ENCODE measurements at regions of chr3 and their contacts with region 1.

Region 1: GRCh38 chr3:113287803-113288648 is 76.7 kb downstream of the BOC start:
- DNase-seq: no peak
- ATAC-seq: peak; percentile 45
- H3K4me3 Mint-ChIP-seq: no peak overlapping the region
- H3K27ac Mint-ChIP-seq: no peak overlapping the region
- H3K4me1 Mint-ChIP-seq: no peaks in the 10 kb centered on the region
- H3K27me3 Mint-ChIP-seq: no peaks in the 10 kb centered on the region
- CTCF ChIP-seq: peak; percentile 59

Region 2: DNA sequence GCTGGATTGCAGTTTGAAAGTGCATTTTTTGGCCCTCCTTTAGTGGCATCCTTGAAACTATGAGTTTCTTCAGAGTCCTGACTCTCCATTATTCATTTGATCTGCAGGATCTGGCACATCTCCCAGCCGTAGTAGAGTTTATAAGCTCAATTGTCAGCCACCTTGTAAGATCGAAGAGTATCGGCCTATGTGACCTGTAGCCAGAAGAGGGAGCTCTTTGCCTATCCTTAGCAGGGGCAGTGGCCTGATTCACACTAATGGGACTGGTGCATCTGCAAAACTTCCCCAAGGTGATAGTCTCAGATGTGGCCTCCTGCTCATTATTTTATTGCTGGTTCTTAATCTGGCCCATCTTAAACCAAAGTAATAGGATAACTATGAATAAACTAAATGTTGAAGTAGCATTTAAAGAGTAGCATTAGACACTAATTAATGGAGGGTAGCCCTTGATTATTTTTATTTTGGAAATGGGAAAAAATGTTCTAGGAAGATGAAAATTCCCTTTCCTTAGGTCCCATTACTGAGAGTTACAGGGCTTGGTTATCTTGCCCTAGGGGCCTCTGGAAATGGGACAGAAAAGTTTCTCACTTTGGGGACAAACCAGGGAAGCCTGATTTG is 1176.1 kb before region 1 on chr3:
- CTCF ChIA-PET with region 1: interaction called, 5 read pairs
- POLR2A ChIA-PET with region 1: no interaction called
- intact Hi-C with region 1: loop called (anchors 5 kb)
- DNase-seq: no peak
- ATAC-seq: peak; percentile 79
- H3K4me3 Mint-ChIP-seq: no peak overlapping the region
- H3K27ac Mint-ChIP-seq: no peak overlapping the region
- H3K4me1 Mint-ChIP-seq: peaks cover 53% of the 10 kb centered on the region
- H3K27me3 Mint-ChIP-seq: no peaks in the 10 kb centered on the region
- CTCF ChIP-seq: peak; percentile 68

Region 3: DNA sequence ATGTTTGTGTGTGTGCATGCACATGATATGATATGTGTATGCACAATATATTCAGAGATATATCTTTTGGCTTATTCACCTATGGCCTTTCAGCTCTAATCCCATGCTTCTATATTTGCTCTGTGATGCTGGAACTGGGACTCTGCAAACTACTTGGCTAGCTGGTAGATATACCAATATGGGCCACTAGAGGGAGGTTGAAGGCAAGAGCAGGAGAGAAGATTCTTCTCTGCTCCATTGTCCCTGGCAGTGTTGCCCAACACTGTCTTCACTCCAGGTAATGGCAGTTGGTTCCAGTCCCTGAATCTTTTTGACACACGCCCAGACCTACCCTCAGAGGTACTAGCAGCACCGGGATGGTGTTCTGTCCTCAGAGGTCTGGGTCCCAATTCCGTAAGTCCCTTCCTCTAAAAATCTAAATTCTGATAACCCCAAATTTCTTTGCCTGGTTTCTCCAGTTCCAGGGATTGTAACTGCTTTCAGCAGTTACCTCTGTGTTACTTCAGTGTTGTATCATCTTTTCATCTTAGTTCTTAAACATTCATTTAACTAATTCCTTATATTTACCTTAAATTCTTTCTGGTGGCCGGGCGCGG is 252.5 kb before region 1 on chr3:
- CTCF ChIA-PET with region 1: interaction called, 27 read pairs
- POLR2A ChIA-PET with region 1: no interaction called
- intact Hi-C with region 1: no loop called
- DNase-seq: no peak
- ATAC-seq: peak; percentile 88
- H3K4me3 Mint-ChIP-seq: no peak overlapping the region
- H3K27ac Mint-ChIP-seq: no peak overlapping the region
- H3K4me1 Mint-ChIP-seq: no peaks in the 10 kb centered on the region
- H3K27me3 Mint-ChIP-seq: no peaks in the 10 kb centered on the region
- CTCF ChIP-seq: no peak

Region 4: DNA sequence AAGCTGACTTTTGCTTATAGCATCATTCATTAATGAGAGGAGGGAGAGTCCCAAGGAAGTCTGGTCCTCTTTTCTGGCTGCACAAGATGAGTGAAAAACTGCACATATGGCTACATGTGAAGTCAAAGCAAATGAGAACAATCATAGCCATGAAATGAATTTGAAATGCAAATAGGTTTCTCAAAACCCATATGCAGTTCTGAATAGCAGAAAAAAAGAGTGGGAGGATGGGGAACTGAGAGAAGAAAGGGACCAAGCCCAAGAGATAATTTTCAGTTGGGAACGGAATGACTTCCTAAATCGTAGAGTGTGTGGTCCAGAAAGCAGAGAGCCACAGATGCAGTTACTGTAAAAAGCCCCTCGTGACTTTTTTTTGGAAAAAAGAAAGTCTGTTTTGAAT is 230.9 kb before region 1 on chr3:
- CTCF ChIA-PET with region 1: interaction called, 44 read pairs
- POLR2A ChIA-PET with region 1: no interaction called
- intact Hi-C with region 1: no loop called
- DNase-seq: no peak
- ATAC-seq: peak; percentile 72
- H3K4me3 Mint-ChIP-seq: no peak overlapping the region
- H3K27ac Mint-ChIP-seq: no peak overlapping the region
- H3K4me1 Mint-ChIP-seq: no peaks in the 10 kb centered on the region
- H3K27me3 Mint-ChIP-seq: no peaks in the 10 kb centered on the region
- CTCF ChIP-seq: no peak

Region 5: DNA sequence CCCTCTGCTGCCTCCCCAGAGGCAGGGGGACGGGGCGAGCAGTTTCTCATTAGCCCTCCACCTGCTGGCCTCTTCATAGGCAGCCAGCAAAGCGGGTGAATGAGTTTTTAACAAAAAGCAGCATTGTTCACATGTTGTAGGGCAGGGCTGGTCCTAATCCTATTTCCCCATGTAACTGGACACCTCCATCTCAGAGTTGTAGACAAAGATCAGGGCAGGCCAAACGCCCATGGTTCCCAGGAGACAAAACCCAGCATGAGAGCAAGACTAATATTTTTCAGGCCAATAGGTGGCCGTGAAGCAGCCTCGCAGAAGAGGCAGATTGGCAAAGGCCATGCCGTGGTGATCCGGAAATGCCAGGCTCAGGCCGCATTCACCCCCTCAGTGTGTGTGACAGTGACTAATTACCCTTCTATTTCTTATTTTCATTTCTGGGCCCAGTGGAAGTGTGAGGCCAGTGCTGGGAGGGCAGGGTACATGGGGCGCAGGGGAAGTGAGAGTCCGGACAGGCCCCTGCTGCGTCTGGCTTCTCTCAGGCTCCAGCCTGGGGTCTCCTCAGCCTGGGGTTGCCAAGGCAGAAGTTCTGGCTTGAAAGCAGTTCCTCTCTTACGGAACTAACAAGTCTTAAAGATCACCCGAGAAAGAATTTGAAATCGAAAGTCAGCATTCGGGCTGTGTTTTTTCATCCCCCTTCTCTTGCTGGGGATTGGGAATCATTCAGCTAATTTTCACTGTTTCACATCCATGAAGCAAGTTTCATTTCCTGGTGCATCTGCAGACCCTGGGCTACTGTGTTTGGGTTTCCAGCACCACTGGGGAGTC is 11.9 kb before region 1 on chr3:
- CTCF ChIA-PET with region 1: interaction called, 17 read pairs
- POLR2A ChIA-PET with region 1: no interaction called
- intact Hi-C with region 1: no loop called
- DNase-seq: peak; percentile 32
- ATAC-seq: peak; percentile 79
- H3K4me3 Mint-ChIP-seq: peak overlapping the region; percentile 83
- H3K27ac Mint-ChIP-seq: peak overlapping the region; percentile 83
- H3K4me1 Mint-ChIP-seq: peaks cover 32% of the 10 kb centered on the region
- H3K27me3 Mint-ChIP-seq: no peaks in the 10 kb centered on the region
- CTCF ChIP-seq: no peak